GM10248 (cell line): ENCODE measurements at regions of chr1 and their contacts with region 1.

Region 1: GRCh38 chr1:19582302-19582701 is 61.8 kb upstream of the NBL1 start:
- DNase-seq: peak; percentile 75
- CTCF ChIP-seq: peak; percentile 82

Region 2: GRCh38 chr1:19384113-19384512 is 198.2 kb before region 1 on chr1:
- CTCF ChIA-PET with region 1: interaction called, 11 read pairs
- POLR2A ChIA-PET with region 1: no interaction called
- DNase-seq: no peak
- CTCF ChIP-seq: no peak

Region 3: GRCh38 chr1:19390901-19391595 is 191.3 kb before region 1 on chr1:
- CTCF ChIA-PET with region 1: interaction called, 46 read pairs
- POLR2A ChIA-PET with region 1: no interaction called
- DNase-seq: peak; percentile 77
- CTCF ChIP-seq: peak; percentile 72

Region 4: DNA sequence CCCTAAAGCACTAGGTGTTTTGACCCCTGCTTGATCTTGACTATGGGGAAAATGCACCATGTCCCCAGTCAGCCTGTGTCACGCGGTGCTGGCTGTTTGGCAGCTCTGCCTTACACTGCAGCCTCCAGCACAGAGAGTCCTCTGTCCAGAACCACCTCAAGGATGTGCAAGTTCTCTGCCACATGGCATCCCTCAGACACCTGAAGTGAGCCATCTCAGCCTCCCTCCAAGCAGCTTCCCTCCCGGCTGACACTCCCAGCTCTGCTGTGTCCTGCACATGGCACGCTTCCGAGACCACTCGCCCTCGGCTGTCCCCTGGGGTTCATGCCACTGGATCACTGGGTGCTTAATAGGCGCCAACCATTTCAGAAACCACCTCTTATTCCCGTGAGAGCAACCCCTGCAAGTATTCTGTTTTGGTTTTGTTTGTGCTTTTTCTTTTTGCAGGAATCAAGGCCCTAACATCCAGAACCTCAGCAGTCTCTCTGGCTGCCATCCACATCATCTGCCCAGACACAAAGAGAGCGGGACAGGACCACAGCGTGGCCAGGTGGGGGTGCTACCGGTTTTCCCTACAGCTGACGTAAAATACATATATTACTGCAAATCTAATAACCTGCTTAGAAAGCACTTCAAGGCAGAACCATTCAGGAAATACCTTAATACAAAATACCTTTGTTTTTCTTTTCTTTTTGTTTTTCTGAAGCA is 142.7 kb before region 1 on chr1:
- CTCF ChIA-PET with region 1: interaction called, 11 read pairs
- POLR2A ChIA-PET with region 1: no interaction called
- DNase-seq: no peak
- CTCF ChIP-seq: peak; percentile 24

Region 5: DNA sequence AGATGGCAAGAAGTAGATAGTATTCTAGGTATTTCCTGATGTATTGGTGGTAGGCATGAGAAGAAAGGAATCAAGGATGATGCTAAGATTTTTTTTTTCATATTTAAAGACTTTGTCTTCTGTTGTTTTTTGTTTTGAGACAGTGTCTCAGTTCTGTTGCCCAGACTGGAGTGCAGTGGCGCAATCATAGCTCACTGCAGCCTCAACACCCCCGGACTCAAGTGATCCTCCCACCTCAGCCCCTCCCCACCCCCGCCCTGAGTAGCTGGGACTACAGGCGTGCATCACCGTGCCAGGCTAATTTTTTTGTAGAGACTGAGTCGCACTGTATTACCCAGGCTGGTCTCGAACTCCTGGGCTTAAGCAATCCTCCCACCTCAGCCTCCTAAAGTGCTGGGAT is 94.2 kb before region 1 on chr1:
- CTCF ChIA-PET with region 1: interaction called, 21 read pairs
- POLR2A ChIA-PET with region 1: no interaction called
- DNase-seq: no peak
- CTCF ChIP-seq: no peak

Region 6: DNA sequence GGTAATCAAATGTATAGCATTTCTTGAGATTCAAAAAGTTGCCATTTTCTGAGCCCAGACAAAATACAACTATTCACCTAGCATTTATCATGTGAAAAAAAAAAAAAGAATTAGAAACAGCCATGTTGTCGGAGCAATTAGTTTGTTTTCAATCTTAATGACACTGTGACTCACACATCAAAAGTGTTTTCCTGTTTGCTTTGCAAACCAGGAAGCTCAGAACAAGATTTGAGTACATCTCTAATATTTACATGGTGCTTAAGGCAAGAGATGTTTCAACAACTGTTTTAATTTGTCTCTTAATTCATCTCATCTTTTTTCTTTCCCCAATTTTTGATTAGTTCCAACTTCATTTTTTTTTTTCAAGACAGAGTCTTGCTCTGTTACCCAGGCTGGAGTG is 34.5 kb before region 1 on chr1:
- CTCF ChIA-PET with region 1: interaction called, 10 read pairs
- POLR2A ChIA-PET with region 1: no interaction called
- DNase-seq: no peak
- CTCF ChIP-seq: no peak

Region 7: GRCh38 chr1:19596714-19597495 is 14.6 kb after region 1 on chr1:
- CTCF ChIA-PET with region 1: interaction called, 18 read pairs
- POLR2A ChIA-PET with region 1: no interaction called
- DNase-seq: peak; percentile 96
- CTCF ChIP-seq: no peak